ENCODE measurements at regions of chr2 and their contacts with region 1.

Region 1: GRCh38 chr2:202911512-202912341 is at the starts of genes CARF and WDR12:
- DNase-seq: peak; percentile 77 to 96 (median 90)
- ATAC-seq: peak; percentile 81
- H3K4me3 ChIP-seq: peak within 1 kb of the TSS; percentile 89 to 98
- H3K4me3 Mint-ChIP-seq: peak within 1 kb of the TSS; percentile 96
- H3K27ac ChIP-seq: peak within 1 kb of the TSS; percentile 70 to 92
- H3K27ac Mint-ChIP-seq: peak within 1 kb of the TSS; percentile 92
- H3K4me1 ChIP-seq: peaks cover 17% of the 10 kb centered on the region
- H3K4me1 Mint-ChIP-seq: peaks cover 42% of the 10 kb centered on the region
- H3K27me3 ChIP-seq: no peaks in the 10 kb centered on the region
- H3K27me3 Mint-ChIP-seq: no peaks in the 10 kb centered on the region
- CTCF ChIP-seq: no peak
- total RNA-seq, gene CARF: 6.3 to 8.7 TPM
- total RNA-seq, gene WDR12: 4.7 to 6.4 TPM

Region 2: GRCh38 chr2:201642579-201643215 is 1269.0 kb before region 1 on chr2:
- CTCF ChIA-PET with region 1: no interaction called
- POLR2A ChIA-PET with region 1: no interaction called
- intact Hi-C with region 1: loop called in 1 of 2 experiments (anchors 2 kb)
- DNase-seq: peak; percentile 65 to 91 (median 83)
- ATAC-seq: peak; percentile 86
- H3K4me3 ChIP-seq: peak overlapping the region; percentile 98 to 99
- H3K4me3 Mint-ChIP-seq: peak overlapping the region; percentile 90
- H3K27ac ChIP-seq: peak overlapping the region; percentile 89 to 99
- H3K27ac Mint-ChIP-seq: peak overlapping the region; percentile 96
- H3K4me1 ChIP-seq: no peaks in the 10 kb centered on the region
- H3K4me1 Mint-ChIP-seq: peaks cover 14% of the 10 kb centered on the region
- H3K27me3 ChIP-seq: no peaks in the 10 kb centered on the region
- H3K27me3 Mint-ChIP-seq: no peaks in the 10 kb centered on the region
- CTCF ChIP-seq: no peak

Region 3: DNA sequence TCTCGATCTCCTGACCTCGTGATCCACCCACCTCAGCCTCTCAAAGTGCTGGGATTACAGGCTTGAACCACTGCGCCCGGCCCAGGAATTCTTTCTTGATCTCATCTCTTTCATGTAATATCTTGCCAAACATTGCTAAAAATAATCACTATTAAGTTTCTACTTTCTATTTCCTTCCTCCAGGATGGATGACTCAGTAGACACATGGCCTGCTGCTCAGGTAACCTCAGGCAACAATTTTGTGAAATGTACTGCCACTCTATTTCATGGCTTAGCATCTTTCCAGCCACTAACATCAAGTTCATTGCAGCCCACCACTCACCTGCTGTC is 662.2 kb before region 1 on chr2:
- CTCF ChIA-PET with region 1: no interaction called
- POLR2A ChIA-PET with region 1: no interaction called
- intact Hi-C with region 1: loop called in 1 of 2 experiments (anchors 10 kb)
- DNase-seq: no peak
- ATAC-seq: no peak
- H3K4me3 ChIP-seq: no peak overlapping the region
- H3K4me3 Mint-ChIP-seq: no peak overlapping the region
- H3K27ac ChIP-seq: no peak overlapping the region
- H3K27ac Mint-ChIP-seq: no peak overlapping the region
- H3K4me1 ChIP-seq: no peaks in the 10 kb centered on the region
- H3K4me1 Mint-ChIP-seq: no peaks in the 10 kb centered on the region
- H3K27me3 ChIP-seq: no peaks in the 10 kb centered on the region
- H3K27me3 Mint-ChIP-seq: peaks cover 9% of the 10 kb centered on the region
- CTCF ChIP-seq: no peak

Region 4: DNA sequence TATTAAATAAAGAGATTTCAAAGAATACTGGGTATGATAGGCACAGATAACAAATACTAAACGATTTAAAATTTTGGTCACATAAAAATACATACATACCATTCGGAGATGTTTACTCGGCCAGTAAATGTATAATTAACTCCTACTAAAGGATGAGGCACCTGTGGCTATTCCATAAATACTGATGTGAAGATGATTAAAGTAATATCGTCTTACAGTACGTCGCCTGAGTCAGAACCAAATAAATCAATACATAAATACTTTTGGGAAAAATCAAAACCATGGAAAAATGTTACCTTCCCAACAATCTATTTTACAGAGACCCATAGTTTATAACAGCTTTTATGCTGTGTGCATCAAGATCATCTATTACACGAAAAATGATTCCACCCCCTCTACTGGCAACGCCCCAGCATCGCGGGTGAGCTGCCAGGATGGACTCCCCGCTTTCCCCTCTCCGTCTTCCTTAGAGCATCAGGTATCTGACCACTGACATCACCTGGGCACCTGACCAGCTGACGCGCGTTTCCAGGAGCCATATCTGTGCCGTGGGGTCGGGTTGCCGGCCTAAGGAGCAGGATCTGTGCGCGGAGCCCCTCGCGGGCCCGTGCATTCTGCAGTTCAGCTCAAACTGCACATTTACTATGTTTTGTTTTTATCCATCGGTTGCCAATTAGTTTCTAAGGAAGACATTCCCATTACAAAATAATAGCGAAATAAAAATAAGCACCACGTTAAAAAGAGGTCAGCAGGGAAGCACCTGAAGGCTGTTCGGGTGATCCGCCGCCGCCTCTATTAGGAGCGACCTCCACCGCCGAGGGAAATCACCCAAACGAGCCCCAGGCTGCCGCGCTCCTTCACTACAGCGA is 41.1 kb before region 1 on chr2:
- CTCF ChIA-PET with region 1: no interaction called
- POLR2A ChIA-PET with region 1: no interaction called
- intact Hi-C with region 1: loop called (anchors 1 to 5 kb)
- DNase-seq: peak; percentile 31 to 80 (median 63)
- ATAC-seq: peak; percentile 79
- H3K4me3 ChIP-seq: peak overlapping the region; percentile 56 to 97
- H3K4me3 Mint-ChIP-seq: peak overlapping the region; percentile 97
- H3K27ac ChIP-seq: peak overlapping the region; percentile 48 to 60
- H3K27ac Mint-ChIP-seq: peak overlapping the region; percentile 83
- H3K4me1 ChIP-seq: no peaks in the 10 kb centered on the region
- H3K4me1 Mint-ChIP-seq: peaks cover 9% of the 10 kb centered on the region
- H3K27me3 ChIP-seq: no peaks in the 10 kb centered on the region
- H3K27me3 Mint-ChIP-seq: no peaks in the 10 kb centered on the region
- CTCF ChIP-seq: peak; percentile 69

Region 5: GRCh38 chr2:203014456-203015199 is 102.9 kb after region 1 on chr2 and contains the start of gene NBEAL1:
- CTCF ChIA-PET with region 1: no interaction called
- POLR2A ChIA-PET with region 1: interaction called, 9 read pairs
- intact Hi-C with region 1: loop called (anchors 1 to 2 kb)
- DNase-seq: peak; percentile 92 to 99 (median 95)
- ATAC-seq: peak; percentile 90
- H3K4me3 ChIP-seq: peak within 1 kb of the TSS; percentile 77 to 97
- H3K4me3 Mint-ChIP-seq: peak within 1 kb of the TSS; percentile 88
- H3K27ac ChIP-seq: peak within 1 kb of the TSS; percentile 86 to 89
- H3K27ac Mint-ChIP-seq: peak within 1 kb of the TSS; percentile 92
- H3K4me1 ChIP-seq: peaks cover 37% of the 10 kb centered on the region
- H3K4me1 Mint-ChIP-seq: peaks cover 46% of the 10 kb centered on the region
- H3K27me3 ChIP-seq: no peaks in the 10 kb centered on the region
- H3K27me3 Mint-ChIP-seq: no peaks in the 10 kb centered on the region
- CTCF ChIP-seq: no peak
- total RNA-seq, gene NBEAL1: 11.2 to 13.2 TPM